ENCODE measurements at regions of chr10 and their contacts with region 1.

Region 1: GRCh38 chr10:35218339-35218955 is 91.8 kb downstream of the CREM start:
- DNase-seq: peak; percentile 95
- H3K4me3 Mint-ChIP-seq: peak overlapping the region; percentile 77
- H3K27ac Mint-ChIP-seq: peak overlapping the region; percentile 97
- H3K4me1 Mint-ChIP-seq: peaks cover 55% of the 10 kb centered on the region
- H3K27me3 Mint-ChIP-seq: no peaks in the 10 kb centered on the region

Region 2: GRCh38 chr10:34994565-34995142 is 223.8 kb before region 1 on chr10:
- intact Hi-C with region 1: loop called (anchors 1 kb)
- DNase-seq: peak; percentile 88
- H3K4me3 Mint-ChIP-seq: no peak overlapping the region
- H3K27ac Mint-ChIP-seq: peak overlapping the region; percentile 77
- H3K4me1 Mint-ChIP-seq: peaks cover 18% of the 10 kb centered on the region
- H3K27me3 Mint-ChIP-seq: no peaks in the 10 kb centered on the region

Region 3: GRCh38 chr10:35011771-35012191 is 206.7 kb before region 1 on chr10:
- intact Hi-C with region 1: no loop called
- DNase-seq: peak; percentile 62
- H3K4me3 Mint-ChIP-seq: peak overlapping the region; percentile 22
- H3K27ac Mint-ChIP-seq: peak overlapping the region; percentile 45
- H3K4me1 Mint-ChIP-seq: peaks cover 6% of the 10 kb centered on the region
- H3K27me3 Mint-ChIP-seq: no peaks in the 10 kb centered on the region

Region 4: DNA sequence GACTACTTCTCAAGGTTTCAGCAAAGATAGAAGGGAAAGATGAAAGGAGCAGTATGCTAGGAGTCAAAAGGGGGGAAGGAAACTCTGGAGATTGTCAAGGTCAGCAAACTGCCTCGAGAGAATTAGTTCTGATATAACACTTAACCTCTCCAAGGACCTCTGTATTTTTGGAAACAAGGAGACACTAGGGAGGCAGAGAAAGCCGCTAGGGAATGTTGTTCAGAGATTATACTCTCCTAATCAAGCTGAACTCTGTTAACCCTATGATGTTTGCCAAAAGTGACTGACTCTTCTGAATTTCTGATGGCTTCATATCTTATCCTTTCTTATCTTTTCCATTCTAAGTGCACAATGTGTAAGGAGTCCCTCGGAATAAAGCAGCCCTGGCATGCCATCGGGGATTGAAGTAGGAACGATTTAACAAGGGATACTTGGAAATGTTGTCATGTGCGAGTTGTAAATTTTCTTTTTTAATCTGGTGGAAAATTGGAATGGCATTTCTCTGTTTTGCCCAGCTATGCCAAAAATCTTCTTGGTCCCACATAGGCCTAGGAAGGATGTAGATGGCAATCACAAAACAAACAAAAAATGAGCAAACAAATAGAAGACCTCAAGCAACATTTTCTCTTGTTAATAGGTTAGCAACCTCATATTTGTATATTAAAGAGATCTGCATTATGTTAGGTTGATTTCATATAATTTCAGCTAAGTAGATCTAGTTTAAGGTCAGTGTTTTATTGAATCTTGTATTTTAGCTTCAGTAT is 64.5 kb before region 1 on chr10:
- intact Hi-C with region 1: loop called (anchors 1 kb)
- DNase-seq: no peak
- H3K4me3 Mint-ChIP-seq: no peak overlapping the region
- H3K27ac Mint-ChIP-seq: no peak overlapping the region
- H3K4me1 Mint-ChIP-seq: peaks cover 37% of the 10 kb centered on the region
- H3K27me3 Mint-ChIP-seq: no peaks in the 10 kb centered on the region

Region 5: DNA sequence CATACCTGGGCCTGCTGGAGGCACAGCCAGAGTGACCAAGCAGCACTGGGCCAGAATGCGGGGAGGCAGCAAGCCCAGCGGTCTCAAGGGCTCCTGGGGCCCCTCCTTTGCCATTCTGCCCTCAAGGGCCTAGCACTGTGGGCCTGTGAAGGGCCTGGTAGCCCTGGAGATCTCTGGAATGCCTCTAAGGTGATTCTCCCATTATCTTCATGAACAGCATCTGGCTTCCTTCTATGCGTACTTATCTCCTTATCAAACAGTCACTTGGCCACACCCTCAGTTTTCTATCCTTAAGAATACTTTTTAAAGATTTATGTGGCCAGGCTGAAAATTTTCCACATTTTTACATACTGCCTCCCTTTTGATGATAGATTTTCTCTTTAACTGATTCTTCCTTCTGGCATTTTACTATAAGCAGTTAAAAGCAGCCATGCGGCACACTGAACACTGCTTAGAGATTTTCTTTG is 50.4 kb after region 1 on chr10:
- intact Hi-C with region 1: no loop called
- DNase-seq: no peak
- H3K4me3 Mint-ChIP-seq: no peak overlapping the region
- H3K27ac Mint-ChIP-seq: no peak overlapping the region
- H3K4me1 Mint-ChIP-seq: peaks cover 5% of the 10 kb centered on the region
- H3K27me3 Mint-ChIP-seq: peaks cover 2% of the 10 kb centered on the region

Region 6: DNA sequence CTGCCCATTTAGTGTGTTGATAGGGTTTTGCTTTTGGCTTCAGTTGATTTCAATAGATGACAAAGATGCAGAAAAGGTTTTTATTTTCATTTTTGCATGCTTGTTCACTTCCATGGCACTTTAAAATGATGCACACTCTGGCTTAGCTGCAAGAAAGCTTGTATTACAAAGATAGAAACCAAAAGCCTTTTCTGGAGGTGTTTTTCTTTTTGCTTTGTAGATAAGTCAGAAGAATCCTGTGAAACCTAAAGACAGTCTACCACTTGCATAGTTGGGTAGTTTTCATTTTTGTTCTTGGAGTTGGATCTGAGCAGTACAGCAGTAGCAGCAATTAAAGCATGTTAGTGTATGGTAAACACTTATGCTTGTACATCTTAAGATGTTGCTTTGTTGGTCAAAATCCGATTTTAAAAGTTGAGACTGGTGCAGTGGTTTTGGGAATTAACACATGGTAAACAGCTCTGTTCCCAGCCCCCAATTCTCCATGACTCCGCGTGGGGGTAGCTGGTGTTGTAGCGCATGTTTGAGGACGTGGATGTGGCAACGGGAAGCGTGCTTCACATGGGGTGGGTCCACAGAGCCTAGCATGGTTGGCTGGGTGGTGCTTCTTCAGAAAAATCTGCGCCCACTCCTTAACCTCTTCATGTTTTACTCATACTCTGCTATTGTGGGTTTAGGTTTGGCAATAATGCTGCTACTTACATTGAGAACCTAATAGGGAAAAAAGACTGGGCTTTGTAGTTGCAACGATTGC is 137.7 kb after region 1 on chr10:
- intact Hi-C with region 1: loop called (anchors 5 kb)
- DNase-seq: peak; percentile 72
- H3K4me3 Mint-ChIP-seq: peak overlapping the region; percentile 75
- H3K27ac Mint-ChIP-seq: peak overlapping the region; percentile 98
- H3K4me1 Mint-ChIP-seq: peaks cover 58% of the 10 kb centered on the region
- H3K27me3 Mint-ChIP-seq: no peaks in the 10 kb centered on the region